PC-9 (cell line): ENCODE measurements at regions of chr7 and their contacts with region 1.

Region 1: DNA sequence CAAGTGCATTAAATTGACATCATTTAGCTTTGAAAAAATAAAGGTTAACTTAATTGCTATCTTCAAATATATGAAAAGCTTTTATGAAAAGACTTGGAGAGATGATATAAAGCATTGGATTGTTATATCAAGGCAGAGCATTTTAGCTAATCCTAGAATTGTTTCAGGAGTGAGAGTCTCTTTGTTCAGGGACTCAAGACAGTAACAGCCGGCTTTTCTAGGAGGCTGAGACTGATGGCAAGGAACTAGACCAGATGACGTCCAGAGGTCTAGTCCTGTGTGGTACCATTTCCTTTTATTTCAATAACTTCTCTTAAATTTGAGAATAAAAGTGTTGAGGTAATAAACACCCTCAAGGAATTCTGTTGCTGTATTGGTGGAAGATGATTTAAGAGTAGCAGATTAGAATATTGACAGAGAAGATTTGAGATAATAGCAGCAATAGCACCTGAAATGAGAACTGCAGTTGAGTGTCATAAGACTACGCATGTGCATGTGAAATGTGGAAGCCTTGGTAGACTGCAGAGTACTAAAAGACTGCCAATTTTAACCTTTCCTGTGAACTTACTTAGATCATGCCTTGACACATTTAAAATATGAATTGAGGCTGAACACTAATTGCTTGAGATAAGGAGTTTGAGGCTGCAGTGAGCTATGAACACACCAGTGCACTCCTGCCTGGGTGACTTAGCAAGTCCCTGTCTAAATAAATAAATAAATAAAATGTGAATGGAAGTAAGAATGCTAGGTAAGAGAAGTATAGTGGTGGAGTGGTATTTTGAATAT is 79.6 kb downstream of the ZNRF2 start:
- DNase-seq: no peak
- H3K4me3 ChIP-seq: no peak overlapping the region
- H3K27ac ChIP-seq: no peak overlapping the region
- H3K4me1 ChIP-seq: no peaks in the 10 kb centered on the region
- H3K27me3 ChIP-seq: no peaks in the 10 kb centered on the region
- CTCF ChIP-seq: no peak

Region 2: DNA sequence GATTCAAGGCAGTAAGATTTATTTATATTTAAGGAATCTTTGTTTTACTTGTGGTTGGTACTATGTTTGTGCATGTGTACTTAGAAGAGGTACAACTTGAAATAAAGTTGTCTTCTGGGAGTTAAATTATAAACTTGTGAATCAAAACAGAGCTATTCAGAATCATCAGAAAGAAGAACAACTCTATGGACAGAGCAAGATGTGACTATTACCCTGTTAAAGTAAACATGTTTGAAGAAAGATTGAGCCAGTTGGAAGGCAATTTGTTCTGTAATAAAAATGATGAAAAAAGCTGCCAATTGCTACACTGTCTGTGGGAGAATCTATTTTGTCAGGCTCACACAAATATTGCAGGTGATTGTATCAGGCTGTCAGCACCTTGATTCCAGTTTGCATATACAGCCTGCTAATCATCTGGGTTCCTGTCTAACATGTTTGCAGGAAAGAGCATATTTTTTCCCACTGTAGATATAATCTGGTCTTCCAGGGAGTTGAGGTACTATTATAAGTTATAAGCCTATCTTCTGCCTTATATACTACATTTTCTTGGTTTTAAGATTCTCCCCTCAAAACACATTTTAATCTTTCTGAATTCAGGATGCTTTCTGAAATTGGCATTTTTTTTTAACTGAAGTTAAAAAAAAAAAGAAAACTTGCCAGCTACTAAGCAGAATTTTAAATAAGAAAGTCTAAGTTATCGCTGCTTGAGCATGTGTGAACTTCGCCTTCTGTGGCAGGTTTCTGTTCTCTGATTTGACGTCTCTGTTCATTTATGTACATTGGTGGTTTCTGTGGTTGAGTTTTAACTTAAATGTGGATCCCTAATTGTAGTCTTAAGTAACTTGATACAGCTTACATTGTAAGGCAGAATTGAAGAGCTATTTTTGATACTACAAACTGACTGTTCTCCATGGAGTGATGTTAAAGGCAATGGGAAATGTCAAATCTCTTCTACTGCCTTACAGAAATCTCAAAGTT is 33.5 kb before region 1 on chr7:
- CTCF ChIA-PET with region 1: interaction called, 16 read pairs
- POLR2A ChIA-PET with region 1: no interaction called
- intact Hi-C with region 1: no loop called
- DNase-seq: no peak
- H3K4me3 ChIP-seq: no peak overlapping the region
- H3K27ac ChIP-seq: no peak overlapping the region
- H3K4me1 ChIP-seq: 0 out of 2 replicates have a peak, but pooled peaks cover 3% of the 10 kb centered on the region
- H3K27me3 ChIP-seq: no peaks in the 10 kb centered on the region
- CTCF ChIP-seq: no peak

Region 3: DNA sequence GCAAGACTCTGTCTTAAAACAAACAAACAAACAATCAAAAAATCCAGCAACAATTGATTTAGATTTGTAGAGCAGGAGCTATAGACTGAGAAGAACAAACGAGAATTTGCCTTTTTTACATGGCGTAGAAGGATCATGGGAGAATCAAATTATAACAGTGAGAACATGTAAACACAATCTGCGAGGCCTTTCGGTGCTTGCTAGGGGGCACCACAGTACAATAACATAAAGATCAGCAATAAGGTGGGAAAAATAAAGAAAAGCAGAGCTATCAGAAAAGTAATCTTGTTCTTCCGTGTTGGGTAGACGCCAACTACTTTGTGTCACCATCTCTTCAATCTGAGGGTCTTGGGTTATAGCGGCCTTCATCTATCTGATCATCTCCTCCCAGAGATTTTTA is 32.4 kb after region 1 on chr7:
- CTCF ChIA-PET with region 1: no interaction called
- POLR2A ChIA-PET with region 1: no interaction called
- intact Hi-C with region 1: loop called (anchors 5 kb)
- DNase-seq: no peak
- H3K4me3 ChIP-seq: no peak overlapping the region
- H3K27ac ChIP-seq: no peak overlapping the region
- H3K4me1 ChIP-seq: peaks cover 8% of the 10 kb centered on the region; the same call in 1 of the 2 replicates
- H3K27me3 ChIP-seq: no peaks in the 10 kb centered on the region
- CTCF ChIP-seq: peak; percentile 39; the same call in 1 of the 2 replicates

Region 4: GRCh38 chr7:32357535-32358277 is 1993.7 kb after region 1 on chr7:
- CTCF ChIA-PET with region 1: no interaction called
- POLR2A ChIA-PET with region 1: no interaction called
- intact Hi-C with region 1: no loop called
- DNase-seq: no peak
- H3K4me3 ChIP-seq: no peak overlapping the region
- H3K27ac ChIP-seq: no peak overlapping the region
- H3K4me1 ChIP-seq: no peaks in the 10 kb centered on the region
- H3K27me3 ChIP-seq: peaks cover 79% of the 10 kb centered on the region
- CTCF ChIP-seq: no peak